CD14-positive monocyte (primary cell): ENCODE measurements at regions of chr6 and their contacts with region 1.

Region 1: DNA sequence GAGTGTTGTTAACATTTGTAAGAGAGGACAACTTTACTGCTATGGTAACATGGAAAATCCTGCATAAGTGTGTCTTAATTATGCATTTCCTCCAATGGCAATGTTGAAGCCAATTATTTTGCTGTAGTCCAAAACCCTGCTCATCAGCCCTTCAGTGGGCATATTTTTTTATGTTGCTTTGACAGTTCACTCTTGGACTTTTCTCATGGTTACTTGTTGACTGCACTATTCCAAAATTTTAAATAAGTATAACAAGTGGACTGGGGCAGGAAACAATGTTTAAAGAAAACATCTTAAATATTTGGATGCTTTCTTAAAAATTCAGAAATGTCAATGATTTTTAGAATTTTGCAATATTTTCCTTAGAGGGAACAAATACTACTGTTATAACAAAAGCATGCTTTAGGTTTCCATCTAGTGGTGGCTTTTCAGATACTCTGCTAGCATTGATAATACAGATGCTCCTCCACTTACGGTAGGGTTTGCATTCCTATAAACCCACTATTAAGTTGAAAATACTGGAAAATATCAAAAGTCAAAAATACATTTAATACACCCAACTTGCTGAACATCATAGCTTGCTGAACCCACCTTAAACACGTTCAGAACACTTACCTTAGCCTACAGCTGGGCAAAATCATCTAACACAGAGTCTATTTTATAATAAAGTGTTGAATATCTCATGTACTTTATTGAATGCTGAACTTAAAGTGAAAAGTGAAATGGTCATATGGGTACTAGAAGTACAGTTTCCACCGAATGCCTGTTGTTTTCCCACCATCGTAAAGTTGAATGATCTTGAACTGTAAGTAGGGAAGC is 86.4 kb downstream of the ADGRG6 start:
- DNase-seq: peak; percentile 13 to 40 (median 28)
- H3K4me3 ChIP-seq: no peak overlapping the region
- H3K4me3 Mint-ChIP-seq: no peak overlapping the region
- H3K27ac ChIP-seq: no peak overlapping the region
- H3K27ac Mint-ChIP-seq: no peak overlapping the region
- H3K4me1 ChIP-seq: no peaks in the 10 kb centered on the region
- H3K4me1 Mint-ChIP-seq: no peaks in the 10 kb centered on the region
- H3K27me3 ChIP-seq: no peaks in the 10 kb centered on the region
- H3K27me3 Mint-ChIP-seq: no peaks in the 10 kb centered on the region
- CTCF ChIP-seq: peak; percentile 69

Region 2: GRCh38 chr6:142146828-142147662 is 241.2 kb before region 1 on chr6 and contains the starts of genes NMBR and VTA1:
- intact Hi-C with region 1: loop called in 1 of 2 experiments (anchors 5 kb)
- DNase-seq: peak; percentile 98 to 100 (median 98)
- H3K4me3 ChIP-seq: peak within 1 kb of the TSS; percentile 79 to 95 (median 87)
- H3K4me3 Mint-ChIP-seq: peak within 1 kb of the TSS; percentile 90 to 95
- H3K27ac ChIP-seq: peak within 1 kb of the TSS; percentile 46 to 83
- H3K27ac Mint-ChIP-seq: peak within 1 kb of the TSS; percentile 86 to 94 (median 90)
- H3K4me1 ChIP-seq: peaks cover 22 to 24% of the 10 kb centered on the region in 2 donors
- H3K4me1 Mint-ChIP-seq: peaks cover 38% of the 10 kb centered on the region
- H3K27me3 ChIP-seq: no peaks in the 10 kb centered on the region
- H3K27me3 Mint-ChIP-seq: peaks cover 0 to 4% (median 4%) of the 10 kb centered on the region in 3 donors
- CTCF ChIP-seq: peak; percentile 81
- polyA plus RNA-seq, gene NMBR: not detected
- polyA plus RNA-seq, gene VTA1: 15.9 to 97.3 (median 74.8) TPM

Region 3: GRCh38 chr6:142155895-142156757 is 232.1 kb before region 1 on chr6:
- intact Hi-C with region 1: loop called in 1 of 2 experiments (anchors 5 kb)
- DNase-seq: peak; percentile 1 to 34 (median 7)
- H3K4me3 ChIP-seq: no peak overlapping the region
- H3K4me3 Mint-ChIP-seq: no peak overlapping the region
- H3K27ac ChIP-seq: peak overlapping the region in 1 of 2 donors; percentile 38
- H3K27ac Mint-ChIP-seq: peak overlapping the region in 2 of 7 donors; percentile 32 to 68
- H3K4me1 ChIP-seq: no peaks in the 10 kb centered on the region
- H3K4me1 Mint-ChIP-seq: peaks cover 8% of the 10 kb centered on the region
- H3K27me3 ChIP-seq: no peaks in the 10 kb centered on the region
- H3K27me3 Mint-ChIP-seq: no peaks in the 10 kb centered on the region
- CTCF ChIP-seq: peak; percentile 71